GM12878 (cell line): ENCODE measurements at regions of chr1 and their contacts with region 1.

Region 1: DNA sequence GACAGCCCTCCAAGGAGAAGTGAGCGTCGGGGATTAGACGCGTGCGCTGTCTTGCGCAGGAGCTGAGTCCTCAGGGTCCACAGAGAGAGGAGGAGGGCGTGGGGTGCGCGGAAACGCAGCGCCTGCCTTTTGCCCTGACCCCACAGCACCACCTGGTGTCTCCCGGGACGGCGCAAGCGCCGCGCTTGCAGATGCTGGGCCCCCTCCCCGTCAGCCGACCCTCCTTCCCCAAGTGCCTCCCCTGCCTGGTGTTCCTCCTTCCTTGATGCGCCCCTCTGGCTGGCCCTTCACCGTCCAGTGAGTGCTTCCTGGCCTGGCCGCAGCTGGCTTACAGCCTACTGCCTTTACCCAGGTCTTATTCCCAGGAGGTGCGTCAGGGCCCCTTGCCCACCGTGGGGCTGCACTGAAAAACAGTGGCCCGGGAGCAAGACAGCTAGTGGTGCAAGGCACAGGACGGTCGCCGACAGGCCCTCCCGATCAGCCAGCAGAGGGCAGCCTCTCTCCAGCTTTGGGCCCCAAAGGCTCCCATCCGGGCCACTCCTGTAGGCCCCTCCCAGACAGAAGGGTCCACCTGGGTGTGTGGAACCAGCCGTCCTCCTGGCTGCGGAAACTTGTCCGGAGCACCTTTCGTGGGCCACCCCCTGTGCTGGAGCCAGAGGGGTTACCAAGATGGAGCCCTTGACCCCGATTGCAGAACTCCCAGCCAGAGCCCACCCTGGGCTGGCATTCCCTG is 12.9 kb upstream of the PHLDA3 start:
- DNase-seq: peak; percentile 41
- ATAC-seq: peak; percentile 90
- H3K4me3 ChIP-seq: no peak overlapping the region; the same call in 1 of the 2 replicates
- H3K27ac ChIP-seq: peak overlapping the region; percentile 78
- H3K4me1 ChIP-seq: peaks cover 41% of the 10 kb centered on the region
- H3K27me3 ChIP-seq: no peaks in the 10 kb centered on the region
- CTCF ChIP-seq: peak; percentile 91 to 97 (median 93)
- EP300 ChIP-seq: no peak
- POLR2A ChIP-seq: no peak
- RAD21 ChIP-seq: peak; percentile 90

Region 2: DNA sequence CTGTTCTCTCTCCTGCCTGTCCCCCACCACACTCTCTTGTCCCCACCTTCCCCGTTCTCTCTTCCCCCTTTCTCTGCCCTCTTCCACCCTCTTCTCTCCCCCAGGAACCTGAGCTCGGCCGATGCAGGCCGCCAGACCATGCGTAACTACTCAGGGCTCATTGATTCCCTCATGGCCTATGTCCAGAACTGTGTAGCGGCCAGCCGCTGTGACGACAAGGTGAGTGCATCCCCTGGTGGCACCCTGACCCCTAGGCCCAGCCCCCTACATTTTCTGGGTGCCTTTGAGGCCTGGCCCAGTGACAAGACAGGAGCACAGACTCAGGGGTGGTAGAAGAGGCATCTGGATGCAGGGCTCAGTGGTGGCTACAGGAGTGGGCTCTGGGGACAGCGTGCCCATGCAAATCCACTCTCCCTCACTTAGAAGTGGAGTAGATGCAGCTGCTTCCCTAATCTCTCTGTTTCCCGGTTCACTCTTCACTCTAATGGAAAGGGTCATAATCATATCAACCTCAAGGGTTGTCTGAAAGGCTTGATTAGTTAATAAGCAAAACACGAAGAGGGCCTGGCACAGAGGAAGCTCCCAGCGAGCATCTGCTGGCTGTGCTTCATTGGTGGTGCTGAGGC is 161.7 kb before region 1 on chr1:
- CTCF ChIA-PET with region 1: no interaction called
- POLR2A ChIA-PET with region 1: no interaction called
- RAD21 ChIA-PET with region 1: no interaction called
- SMC1A ChIA-PET with region 1: no interaction called
- in situ Hi-C with region 1: no loop called
- intact Hi-C with region 1: no loop called
- DNase-seq: no peak
- ATAC-seq: no peak
- H3K4me3 ChIP-seq: no peak overlapping the region
- H3K27ac ChIP-seq: no peak overlapping the region
- H3K4me1 ChIP-seq: no peaks in the 10 kb centered on the region
- H3K27me3 ChIP-seq: peaks cover 0 to 17% of the 10 kb centered on the region in 2 experiments; a peak in 3 of 4 replicates
- CTCF ChIP-seq: no peak
- EP300 ChIP-seq: no peak
- POLR2A ChIP-seq: no peak
- RAD21 ChIP-seq: no peak

Region 3: GRCh38 chr1:201348211-201348566 is 133.7 kb before region 1 on chr1:
- CTCF ChIA-PET with region 1: interaction called, 18 read pairs
- POLR2A ChIA-PET with region 1: no interaction called
- RAD21 ChIA-PET with region 1: interaction called, 13 read pairs
- SMC1A ChIA-PET with region 1: no interaction called
- in situ Hi-C with region 1: no loop called
- intact Hi-C with region 1: no loop called
- DNase-seq: no peak
- ATAC-seq: peak; percentile 89
- H3K4me3 ChIP-seq: no peak overlapping the region
- H3K27ac ChIP-seq: no peak overlapping the region
- H3K4me1 ChIP-seq: no peaks in the 10 kb centered on the region
- H3K27me3 ChIP-seq: peaks cover 0 to 3% of the 10 kb centered on the region in 2 experiments; a peak in 2 of 4 replicates
- CTCF ChIP-seq: peak; percentile 72 to 78 (median 74)
- EP300 ChIP-seq: no peak
- POLR2A ChIP-seq: no peak
- RAD21 ChIP-seq: peak; percentile 58

Region 4: GRCh38 chr1:201408176-201408833 is 73.6 kb before region 1 on chr1:
- CTCF ChIA-PET with region 1: interaction called, 28 read pairs
- POLR2A ChIA-PET with region 1: interaction called, 4 read pairs
- RAD21 ChIA-PET with region 1: interaction called, 32 read pairs
- SMC1A ChIA-PET with region 1: interaction called, 7 read pairs
- in situ Hi-C with region 1: no loop called
- intact Hi-C with region 1: no loop called
- DNase-seq: no peak
- ATAC-seq: peak; percentile 51
- H3K4me3 ChIP-seq: no peak overlapping the region
- H3K27ac ChIP-seq: no peak overlapping the region
- H3K4me1 ChIP-seq: peaks cover 35% of the 10 kb centered on the region
- H3K27me3 ChIP-seq: no peaks in the 10 kb centered on the region; a peak in 1 of 4 replicates
- CTCF ChIP-seq: peak; percentile 96 to 99 (median 98); a peak in 5 of 6 replicates
- EP300 ChIP-seq: no peak
- POLR2A ChIP-seq: no peak
- RAD21 ChIP-seq: peak; percentile 70

Region 5: DNA sequence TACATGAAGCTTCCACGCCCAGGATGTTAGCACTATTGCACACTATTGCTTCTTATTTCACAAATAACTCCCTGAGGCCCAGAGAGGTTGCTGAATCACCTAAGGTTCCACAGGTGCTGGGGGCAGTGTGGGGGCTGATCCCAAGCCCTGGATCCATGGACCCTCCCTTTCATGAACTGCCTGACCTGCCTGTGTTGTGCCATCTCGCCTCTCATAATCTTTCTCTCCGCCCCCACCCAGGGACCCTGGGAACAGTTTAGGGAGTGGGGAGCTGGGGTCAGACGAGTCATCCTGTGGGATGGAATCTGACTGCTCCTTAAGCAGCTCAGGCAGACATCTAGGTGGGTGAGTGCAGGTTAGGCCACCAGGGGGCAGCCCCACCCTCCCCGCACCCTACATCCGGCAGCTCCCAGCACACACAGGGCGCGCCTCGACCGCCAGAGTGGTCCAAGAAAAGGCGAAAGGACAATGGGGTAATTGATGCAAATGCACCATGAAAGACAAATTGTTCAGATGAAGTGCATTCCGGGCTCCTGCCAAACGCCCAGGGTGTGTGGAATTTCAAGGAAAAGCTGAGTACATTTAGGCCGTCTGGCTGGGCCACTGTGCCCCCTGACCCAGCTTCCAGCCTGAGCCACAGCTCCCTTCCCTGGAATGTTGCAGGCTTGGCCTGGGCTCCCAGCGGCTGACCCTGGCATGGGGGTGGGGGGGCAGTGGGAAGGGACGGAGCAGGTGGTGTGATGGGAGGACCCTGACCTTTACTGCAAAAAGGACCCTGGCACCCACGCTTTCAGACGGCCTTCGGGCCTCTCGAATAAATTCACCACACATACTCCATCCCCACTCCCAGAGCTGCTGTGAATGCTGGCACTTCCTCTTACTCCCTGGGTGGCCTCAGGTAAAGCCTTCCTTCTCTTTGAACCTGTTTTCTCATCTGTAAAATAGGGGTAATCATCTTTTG is 33.7 kb before region 1 on chr1:
- CTCF ChIA-PET with region 1: interaction called, 455 read pairs
- POLR2A ChIA-PET with region 1: interaction called, 59 read pairs
- RAD21 ChIA-PET with region 1: interaction called, 301 read pairs
- SMC1A ChIA-PET with region 1: interaction called, 182 read pairs
- in situ Hi-C with region 1: no loop called
- intact Hi-C with region 1: loop called (anchors 1 kb)
- DNase-seq: no peak
- ATAC-seq: peak; percentile 98
- H3K4me3 ChIP-seq: no peak overlapping the region
- H3K27ac ChIP-seq: no peak overlapping the region
- H3K4me1 ChIP-seq: peaks cover 16% of the 10 kb centered on the region
- H3K27me3 ChIP-seq: no peaks in the 10 kb centered on the region
- CTCF ChIP-seq: peak; percentile 87 to 95 (median 91)
- EP300 ChIP-seq: no peak
- POLR2A ChIP-seq: no peak
- RAD21 ChIP-seq: peak; percentile 77

Region 6: GRCh38 chr1:201495471-201496295 is 13.8 kb after region 1 on chr1:
- CTCF ChIA-PET with region 1: interaction called, 198 read pairs
- POLR2A ChIA-PET with region 1: interaction called, 3 read pairs
- RAD21 ChIA-PET with region 1: interaction called, 505 read pairs
- SMC1A ChIA-PET with region 1: interaction called, 514 read pairs
- in situ Hi-C with region 1: no loop called
- intact Hi-C with region 1: no loop called
- DNase-seq: no peak
- ATAC-seq: no peak
- H3K4me3 ChIP-seq: no peak overlapping the region
- H3K27ac ChIP-seq: no peak overlapping the region
- H3K4me1 ChIP-seq: no peaks in the 10 kb centered on the region
- H3K27me3 ChIP-seq: no peaks in the 10 kb centered on the region
- CTCF ChIP-seq: no peak
- EP300 ChIP-seq: no peak
- POLR2A ChIP-seq: no peak
- RAD21 ChIP-seq: no peak

Region 7: GRCh38 chr1:201530741-201531531 is 49.0 kb after region 1 on chr1:
- CTCF ChIA-PET with region 1: interaction called, 12 read pairs
- POLR2A ChIA-PET with region 1: no interaction called
- RAD21 ChIA-PET with region 1: interaction called, 7 read pairs
- SMC1A ChIA-PET with region 1: interaction called, 8 read pairs
- in situ Hi-C with region 1: no loop called
- intact Hi-C with region 1: no loop called
- DNase-seq: no peak
- ATAC-seq: peak; percentile 90
- H3K4me3 ChIP-seq: no peak overlapping the region
- H3K27ac ChIP-seq: no peak overlapping the region
- H3K4me1 ChIP-seq: no peaks in the 10 kb centered on the region
- H3K27me3 ChIP-seq: no peaks in the 10 kb centered on the region
- CTCF ChIP-seq: peak; percentile 72 to 83 (median 75)
- EP300 ChIP-seq: no peak
- POLR2A ChIP-seq: no peak
- RAD21 ChIP-seq: peak; percentile 64

Region 8: DNA sequence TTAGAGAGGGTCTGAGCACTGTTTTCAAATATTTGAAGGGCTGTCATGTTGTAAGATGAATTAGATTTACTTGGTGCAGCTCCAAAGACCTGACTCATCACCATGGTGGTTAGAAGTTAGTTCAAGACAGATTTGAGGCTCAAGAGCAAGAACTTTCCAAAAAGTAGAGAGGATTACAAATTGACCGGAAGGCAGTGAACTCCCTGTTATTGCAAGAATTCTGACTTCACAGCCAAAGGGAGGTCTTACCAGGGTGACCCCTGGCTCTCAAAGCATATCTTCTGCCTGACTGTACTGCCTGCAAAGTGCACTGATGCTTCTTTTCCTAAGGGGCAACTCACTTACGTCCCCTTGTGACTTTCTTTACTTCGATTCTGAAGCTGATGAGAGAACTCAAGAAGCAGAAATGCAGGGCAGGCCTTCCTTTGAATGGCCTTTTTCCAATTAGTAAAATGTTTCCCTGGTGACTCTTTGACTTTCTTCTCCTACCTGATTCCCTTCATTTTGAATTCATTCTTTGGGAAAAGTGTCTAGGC is 143.4 kb after region 1 on chr1:
- CTCF ChIA-PET with region 1: no interaction called
- POLR2A ChIA-PET with region 1: no interaction called
- RAD21 ChIA-PET with region 1: no interaction called
- SMC1A ChIA-PET with region 1: no interaction called
- in situ Hi-C with region 1: no loop called
- intact Hi-C with region 1: no loop called
- DNase-seq: no peak
- ATAC-seq: no peak
- H3K4me3 ChIP-seq: no peak overlapping the region
- H3K27ac ChIP-seq: no peak overlapping the region
- H3K4me1 ChIP-seq: no peaks in the 10 kb centered on the region
- H3K27me3 ChIP-seq: peaks cover 0 to 1% of the 10 kb centered on the region in 2 experiments; a peak in 2 of 4 replicates
- CTCF ChIP-seq: no peak
- EP300 ChIP-seq: no peak
- POLR2A ChIP-seq: no peak
- RAD21 ChIP-seq: no peak

Region 9: GRCh38 chr1:201709564-201710295 is 227.8 kb after region 1 on chr1:
- CTCF ChIA-PET with region 1: interaction called, 15 read pairs
- POLR2A ChIA-PET with region 1: no interaction called
- RAD21 ChIA-PET with region 1: interaction called, 8 read pairs
- SMC1A ChIA-PET with region 1: interaction called, 5 read pairs
- in situ Hi-C with region 1: no loop called
- intact Hi-C with region 1: no loop called
- DNase-seq: no peak
- ATAC-seq: peak; percentile 99
- H3K4me3 ChIP-seq: no peak overlapping the region
- H3K27ac ChIP-seq: no peak overlapping the region
- H3K4me1 ChIP-seq: peaks cover 4% of the 10 kb centered on the region; the same call in 1 of the 2 replicates
- H3K27me3 ChIP-seq: no peaks in the 10 kb centered on the region
- CTCF ChIP-seq: peak; percentile 80 to 97 (median 85)
- EP300 ChIP-seq: no peak
- POLR2A ChIP-seq: no peak
- RAD21 ChIP-seq: peak; percentile 79

Region 10: GRCh38 chr1:201783572-201783971 is 301.6 kb after region 1 on chr1:
- CTCF ChIA-PET with region 1: no interaction called
- POLR2A ChIA-PET with region 1: no interaction called
- RAD21 ChIA-PET with region 1: no interaction called
- SMC1A ChIA-PET with region 1: no interaction called
- in situ Hi-C with region 1: no loop called
- intact Hi-C with region 1: no loop called
- DNase-seq: no peak
- ATAC-seq: no peak
- H3K4me3 ChIP-seq: no peak overlapping the region
- H3K27ac ChIP-seq: no peak overlapping the region
- H3K4me1 ChIP-seq: no peaks in the 10 kb centered on the region
- H3K27me3 ChIP-seq: peaks cover 0 to 3% of the 10 kb centered on the region in 2 experiments; a peak in 2 of 4 replicates
- CTCF ChIP-seq: 0 out of 6 replicates have a peak, but pooled peaks of 1 of the 3 experiments have one; percentile 2
- EP300 ChIP-seq: no peak
- POLR2A ChIP-seq: no peak
- RAD21 ChIP-seq: peak; percentile 16; the same call in 1 of the 2 replicates